Activated T-helper 1 cell treated with anti-CD3 and anti-CD28 coated beads, Interleukin-12 subunit alpha, Interleukin-12 subunit beta, Interleukin-2, Interleukin-4 antibody, amounts not matched to agents 30 ng/mL and 10 ng/mL and 1 ng/mL, durations not matched to agents 14 hours and 24 hours and 36 hours (primary cell): ENCODE measurements at regions of chr9 and their contacts with region 1.

Region 1: GRCh38 chr9:4174781-4175180 is 125.1 kb downstream of the GLIS3 start:
- DNase-seq: no peak
- H3K4me3 Mint-ChIP-seq: no peak overlapping the region
- H3K27ac Mint-ChIP-seq: no peak overlapping the region
- H3K4me1 Mint-ChIP-seq: no peaks in the 10 kb centered on the region
- H3K27me3 Mint-ChIP-seq: peaks cover 3% of the 10 kb centered on the region

Region 2: GRCh38 chr9:4228606-4229005 is 53.8 kb after region 1 on chr9:
- intact Hi-C with region 1: loop called (anchors 5 kb)
- DNase-seq: no peak
- H3K4me3 Mint-ChIP-seq: no peak overlapping the region
- H3K27ac Mint-ChIP-seq: no peak overlapping the region
- H3K4me1 Mint-ChIP-seq: peaks cover 6% of the 10 kb centered on the region
- H3K27me3 Mint-ChIP-seq: peaks cover 7% of the 10 kb centered on the region